ENCODE measurements at regions of chr1 and their contacts with region 1.

Region 1: GRCh38 chr1:193183019-193183627 is 3.3 kb downstream of the B3GALT2 start:
- DNase-seq: peak; percentile 68
- H3K4me3 ChIP-seq: peak overlapping the region; percentile 4
- H3K27ac ChIP-seq: no peak overlapping the region
- H3K4me1 ChIP-seq: peaks cover 64% of the 10 kb centered on the region
- H3K27me3 ChIP-seq: no peaks in the 10 kb centered on the region
- CTCF ChIP-seq: peak; percentile 88

Region 2: GRCh38 chr1:193241132-193241827 is 58.2 kb after region 1 on chr1:
- CTCF ChIA-PET with region 1: no interaction called
- POLR2A ChIA-PET with region 1: no interaction called
- intact Hi-C with region 1: no loop called
- DNase-seq: no peak
- H3K4me3 ChIP-seq: no peak overlapping the region
- H3K27ac ChIP-seq: no peak overlapping the region
- H3K4me1 ChIP-seq: no peaks in the 10 kb centered on the region
- H3K27me3 ChIP-seq: no peaks in the 10 kb centered on the region
- CTCF ChIP-seq: no peak

Region 3: GRCh38 chr1:193322223-193322622 is 139.1 kb after region 1 on chr1:
- CTCF ChIA-PET with region 1: no interaction called
- POLR2A ChIA-PET with region 1: no interaction called
- intact Hi-C with region 1: no loop called
- DNase-seq: peak; percentile 68
- H3K4me3 ChIP-seq: no peak overlapping the region
- H3K27ac ChIP-seq: no peak overlapping the region
- H3K4me1 ChIP-seq: no peaks in the 10 kb centered on the region
- H3K27me3 ChIP-seq: no peaks in the 10 kb centered on the region
- CTCF ChIP-seq: no peak

Region 4: DNA sequence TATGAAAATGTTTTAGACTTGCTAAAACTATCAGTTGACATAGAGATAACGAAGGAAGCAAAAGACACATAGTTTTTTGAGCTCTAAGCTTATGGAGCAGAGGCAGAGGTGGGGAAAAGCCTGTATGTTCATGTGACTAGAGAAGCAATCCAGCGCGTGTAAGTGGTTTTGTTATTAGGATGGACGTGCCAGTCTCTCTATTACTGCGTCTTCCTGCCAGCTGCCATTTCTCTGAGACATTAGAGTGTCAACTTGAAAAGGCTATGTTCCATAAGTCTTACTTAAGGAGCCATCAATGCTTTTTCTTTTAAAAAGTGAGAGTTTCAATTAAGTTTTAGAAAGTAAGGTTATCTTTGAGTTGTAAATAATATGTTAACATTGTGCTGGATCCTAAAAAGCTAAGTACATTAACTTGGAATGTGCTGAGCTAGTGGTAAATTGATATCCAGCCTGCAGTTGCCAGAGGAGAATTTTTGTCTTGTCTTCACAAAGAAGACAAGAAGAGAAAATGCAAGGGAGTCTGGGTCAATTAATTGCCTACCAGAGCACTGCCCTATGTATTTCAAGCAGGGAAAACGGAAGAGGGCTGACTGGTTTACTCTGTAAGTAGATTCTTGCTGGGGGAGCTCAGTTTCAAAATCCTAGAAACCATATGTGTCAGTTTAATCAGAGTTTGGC is 165.1 kb after region 1 on chr1:
- CTCF ChIA-PET with region 1: no interaction called
- POLR2A ChIA-PET with region 1: no interaction called
- intact Hi-C with region 1: loop called (anchors 5 kb)
- DNase-seq: peak; percentile 90
- H3K4me3 ChIP-seq: no peak overlapping the region
- H3K27ac ChIP-seq: peak overlapping the region; percentile 79
- H3K4me1 ChIP-seq: peaks cover 53% of the 10 kb centered on the region
- H3K27me3 ChIP-seq: no peaks in the 10 kb centered on the region
- CTCF ChIP-seq: no peak

Measured in A673 (cell line).